Activated CD4-positive, alpha-beta T cell treated with anti-CD3 and anti-CD28 coated beads, Interleukin-2, amount 10 ng/mL, durations not matched to agents 24 days and 14 days (primary cell): ENCODE measurements at regions of chr3 and their contacts with region 1.

Region 1: DNA sequence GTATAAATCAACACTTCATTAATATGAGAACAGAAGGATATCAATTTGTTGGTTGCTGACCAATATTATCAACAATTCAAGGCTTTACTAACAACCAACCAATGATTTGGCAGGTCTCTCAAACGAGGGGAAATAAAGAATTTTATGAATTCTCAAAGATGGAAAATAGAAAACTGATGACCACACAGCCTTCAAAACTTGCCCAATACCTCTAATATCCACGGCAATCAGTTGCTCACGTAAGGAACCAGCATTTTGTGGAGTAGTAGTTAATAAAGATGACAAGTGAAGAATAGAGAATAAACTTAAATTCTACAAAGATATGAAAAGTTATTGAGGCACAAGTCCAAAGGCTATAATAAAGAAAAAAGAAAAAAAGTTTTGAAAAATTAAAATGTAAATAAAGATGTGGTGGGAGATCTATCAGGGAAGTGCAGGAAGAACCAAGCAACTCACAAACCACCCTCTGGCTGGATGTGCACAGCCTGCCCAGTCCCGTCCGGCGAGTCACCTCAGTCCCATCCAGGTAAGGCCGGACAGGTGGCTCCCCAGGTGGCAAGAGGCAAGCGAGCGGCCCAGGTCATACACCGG is 808 bp downstream of the GK5 start:
- DNase-seq: no peak
- H3K4me3 Mint-ChIP-seq: peak overlapping the region; percentile 95
- H3K27ac Mint-ChIP-seq: peak overlapping the region; percentile 53
- H3K4me1 Mint-ChIP-seq: peaks cover 10% of the 10 kb centered on the region
- H3K27me3 Mint-ChIP-seq: no peaks in the 10 kb centered on the region

Region 2: GRCh38 chr3:141063831-141064230 is 1160.7 kb before region 1 on chr3:
- intact Hi-C with region 1: no loop called
- DNase-seq: no peak
- H3K4me3 Mint-ChIP-seq: no peak overlapping the region
- H3K27ac Mint-ChIP-seq: no peak overlapping the region
- H3K4me1 Mint-ChIP-seq: peaks cover 1% of the 10 kb centered on the region
- H3K27me3 Mint-ChIP-seq: peaks cover 14% of the 10 kb centered on the region

Region 3: DNA sequence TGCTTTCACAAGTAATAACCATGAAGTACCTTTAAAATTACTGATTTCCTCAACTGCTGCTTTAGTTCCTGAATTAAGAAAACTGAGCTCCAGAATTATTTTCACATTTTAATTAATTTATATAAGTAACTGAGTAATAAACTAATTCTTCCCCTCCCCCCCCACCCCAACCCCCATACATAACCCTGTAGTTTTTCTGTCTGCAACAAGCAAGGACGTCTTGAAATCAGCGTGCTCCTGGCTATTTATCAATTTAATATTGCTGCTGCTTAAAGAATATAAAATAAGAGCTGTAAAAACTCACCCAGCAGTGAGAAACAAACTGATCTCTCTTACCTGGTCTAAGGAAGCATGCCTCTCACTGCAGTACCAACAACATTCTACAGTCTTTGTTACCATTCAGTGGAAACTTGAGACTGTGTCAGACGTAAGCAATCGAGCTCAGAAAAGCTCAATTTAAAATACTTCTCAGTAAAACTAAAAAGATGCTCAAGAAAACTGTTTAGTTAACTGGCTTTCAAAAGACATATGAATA is 196.3 kb before region 1 on chr3:
- intact Hi-C with region 1: loop called (anchors 5 kb)
- DNase-seq: peak; percentile 84
- H3K4me3 Mint-ChIP-seq: peak overlapping the region; percentile 87
- H3K27ac Mint-ChIP-seq: peak overlapping the region; percentile 59
- H3K4me1 Mint-ChIP-seq: peaks cover 13% of the 10 kb centered on the region
- H3K27me3 Mint-ChIP-seq: no peaks in the 10 kb centered on the region

Region 4: DNA sequence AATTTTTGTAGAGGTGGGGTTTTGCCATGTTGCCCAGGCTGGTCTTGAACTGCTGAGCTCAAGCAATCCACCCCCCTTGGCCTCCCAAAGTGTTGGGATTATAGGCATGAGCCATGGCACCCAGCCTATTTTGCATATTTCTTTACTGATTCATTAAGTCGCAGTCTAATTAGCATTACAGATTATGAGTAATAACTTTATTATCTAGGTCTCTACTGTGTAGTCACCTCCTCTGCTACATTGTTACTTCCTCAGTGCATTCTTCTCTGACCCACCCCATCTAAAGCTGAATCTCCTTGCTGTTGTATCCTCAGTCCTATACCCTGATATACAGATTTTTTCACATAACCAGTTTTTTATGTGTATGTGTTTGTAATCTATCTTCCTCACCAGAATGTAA is 136.9 kb before region 1 on chr3:
- intact Hi-C with region 1: no loop called
- DNase-seq: no peak
- H3K4me3 Mint-ChIP-seq: no peak overlapping the region
- H3K27ac Mint-ChIP-seq: no peak overlapping the region
- H3K4me1 Mint-ChIP-seq: no peaks in the 10 kb centered on the region
- H3K27me3 Mint-ChIP-seq: peaks cover 4% of the 10 kb centered on the region

Region 5: DNA sequence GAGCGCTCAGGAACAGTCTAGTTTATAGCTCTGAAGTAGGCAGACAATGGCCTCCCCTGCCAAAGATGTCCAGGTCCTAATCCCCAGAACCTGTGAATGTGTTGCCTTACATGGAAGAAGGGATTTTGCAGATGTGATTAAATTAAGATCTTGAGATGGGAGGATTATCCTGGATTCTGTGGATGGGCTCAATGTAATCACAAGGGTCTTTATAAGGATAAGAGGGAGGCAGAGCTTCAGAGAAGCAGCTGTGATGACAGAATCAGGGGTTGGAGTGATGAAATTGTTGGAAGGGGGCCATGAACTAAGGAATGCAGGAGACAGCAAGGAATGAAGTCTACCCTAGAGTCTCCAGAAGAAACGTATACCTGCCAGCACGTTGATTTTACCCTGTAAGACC is 14.8 kb after region 1 on chr3:
- intact Hi-C with region 1: no loop called
- DNase-seq: no peak
- H3K4me3 Mint-ChIP-seq: no peak overlapping the region
- H3K27ac Mint-ChIP-seq: no peak overlapping the region
- H3K4me1 Mint-ChIP-seq: no peaks in the 10 kb centered on the region
- H3K27me3 Mint-ChIP-seq: peaks cover 12% of the 10 kb centered on the region

Region 6: GRCh38 chr3:142270407-142270806 is 45.8 kb after region 1 on chr3:
- intact Hi-C with region 1: loop called (anchors 2 kb)
- DNase-seq: peak; percentile 82
- H3K4me3 Mint-ChIP-seq: peak overlapping the region; percentile 41
- H3K27ac Mint-ChIP-seq: peak overlapping the region; percentile 88
- H3K4me1 Mint-ChIP-seq: peaks cover 15% of the 10 kb centered on the region
- H3K27me3 Mint-ChIP-seq: no peaks in the 10 kb centered on the region